CD8-positive, alpha-beta T cell (primary cell): ENCODE measurements at regions of chr15 and their contacts with region 1.

Region 1: DNA sequence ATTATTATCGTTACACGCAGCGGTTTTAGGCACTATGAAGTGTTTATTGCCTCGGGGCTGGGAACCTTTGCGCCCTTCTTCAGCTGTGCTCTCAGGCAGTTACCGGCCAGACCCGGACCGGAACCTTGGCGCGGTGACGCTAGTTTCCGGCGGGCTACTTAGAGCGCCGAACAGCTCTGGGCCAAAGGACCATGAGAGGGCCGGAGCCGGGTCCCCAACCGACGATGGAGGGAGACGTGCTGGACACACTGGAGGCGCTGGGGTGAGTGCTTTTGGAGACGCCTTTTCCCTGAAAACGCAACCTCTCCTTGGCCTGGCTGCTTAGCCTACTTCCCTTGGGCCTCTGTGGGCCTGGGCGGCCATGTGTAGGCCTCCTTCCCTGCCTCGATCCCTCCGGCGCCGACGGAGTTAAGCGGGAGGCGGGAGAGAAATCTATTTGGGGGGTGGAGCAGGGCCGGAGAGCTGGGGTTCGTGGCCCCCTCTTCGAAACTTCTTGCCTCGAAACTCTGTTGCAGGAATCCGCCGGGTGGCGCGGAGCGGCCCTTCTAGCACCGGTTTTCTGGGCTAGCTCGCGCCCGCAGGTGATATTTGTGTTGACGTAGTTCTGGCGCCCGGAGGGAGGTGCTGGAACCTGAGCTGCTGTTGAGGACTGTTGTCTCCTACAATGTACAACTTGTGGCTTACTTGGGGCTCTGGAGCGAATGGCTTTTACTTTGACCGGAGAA is at the start of gene FAM98B:
- DNase-seq: peak; percentile 80 to 95 (median 87)
- ATAC-seq: peak; percentile 89
- H3K4me3 ChIP-seq: peak within 1 kb of the TSS; percentile 84 to 87
- H3K4me3 Mint-ChIP-seq: peak within 1 kb of the TSS; percentile 98
- H3K27ac ChIP-seq: peak within 1 kb of the TSS; percentile 79 to 88
- H3K27ac Mint-ChIP-seq: peak within 1 kb of the TSS; percentile 99
- H3K4me1 ChIP-seq: peaks cover 19% of the 10 kb centered on the region
- H3K4me1 Mint-ChIP-seq: peaks cover 39% of the 10 kb centered on the region
- H3K27me3 ChIP-seq: no peaks in the 10 kb centered on the region
- H3K27me3 Mint-ChIP-seq: no peaks in the 10 kb centered on the region
- CTCF ChIP-seq: no peak
- total RNA-seq, gene FAM98B: 18.4 to 19.4 TPM

Region 2: GRCh38 chr15:36579792-36580431 is 1874.2 kb before region 1 on chr15:
- CTCF ChIA-PET with region 1: no interaction called
- POLR2A ChIA-PET with region 1: no interaction called
- intact Hi-C with region 1: loop called in 1 of 2 experiments (anchors 5 kb)
- DNase-seq: peak in 6 of 9 experiments; percentile 1 to 57 (median 24)
- ATAC-seq: peak; percentile 22
- H3K4me3 ChIP-seq: peak overlapping the region; percentile 87 to 95
- H3K4me3 Mint-ChIP-seq: peak overlapping the region; percentile 91
- H3K27ac ChIP-seq: peak overlapping the region; percentile 74 to 93
- H3K27ac Mint-ChIP-seq: peak overlapping the region; percentile 93
- H3K4me1 ChIP-seq: peaks cover 12% of the 10 kb centered on the region
- H3K4me1 Mint-ChIP-seq: peaks cover 32% of the 10 kb centered on the region
- H3K27me3 ChIP-seq: no peaks in the 10 kb centered on the region
- H3K27me3 Mint-ChIP-seq: no peaks in the 10 kb centered on the region
- CTCF ChIP-seq: no peak

Region 3: GRCh38 chr15:38021259-38021658 is 432.9 kb before region 1 on chr15:
- CTCF ChIA-PET with region 1: no interaction called
- POLR2A ChIA-PET with region 1: no interaction called
- intact Hi-C with region 1: no loop called
- DNase-seq: no peak
- ATAC-seq: no peak
- H3K4me3 ChIP-seq: no peak overlapping the region
- H3K4me3 Mint-ChIP-seq: no peak overlapping the region
- H3K27ac ChIP-seq: no peak overlapping the region
- H3K27ac Mint-ChIP-seq: no peak overlapping the region
- H3K4me1 ChIP-seq: no peaks in the 10 kb centered on the region
- H3K4me1 Mint-ChIP-seq: no peaks in the 10 kb centered on the region
- H3K27me3 ChIP-seq: no peaks in the 10 kb centered on the region
- H3K27me3 Mint-ChIP-seq: peaks cover 4% of the 10 kb centered on the region
- CTCF ChIP-seq: no peak

Region 4: DNA sequence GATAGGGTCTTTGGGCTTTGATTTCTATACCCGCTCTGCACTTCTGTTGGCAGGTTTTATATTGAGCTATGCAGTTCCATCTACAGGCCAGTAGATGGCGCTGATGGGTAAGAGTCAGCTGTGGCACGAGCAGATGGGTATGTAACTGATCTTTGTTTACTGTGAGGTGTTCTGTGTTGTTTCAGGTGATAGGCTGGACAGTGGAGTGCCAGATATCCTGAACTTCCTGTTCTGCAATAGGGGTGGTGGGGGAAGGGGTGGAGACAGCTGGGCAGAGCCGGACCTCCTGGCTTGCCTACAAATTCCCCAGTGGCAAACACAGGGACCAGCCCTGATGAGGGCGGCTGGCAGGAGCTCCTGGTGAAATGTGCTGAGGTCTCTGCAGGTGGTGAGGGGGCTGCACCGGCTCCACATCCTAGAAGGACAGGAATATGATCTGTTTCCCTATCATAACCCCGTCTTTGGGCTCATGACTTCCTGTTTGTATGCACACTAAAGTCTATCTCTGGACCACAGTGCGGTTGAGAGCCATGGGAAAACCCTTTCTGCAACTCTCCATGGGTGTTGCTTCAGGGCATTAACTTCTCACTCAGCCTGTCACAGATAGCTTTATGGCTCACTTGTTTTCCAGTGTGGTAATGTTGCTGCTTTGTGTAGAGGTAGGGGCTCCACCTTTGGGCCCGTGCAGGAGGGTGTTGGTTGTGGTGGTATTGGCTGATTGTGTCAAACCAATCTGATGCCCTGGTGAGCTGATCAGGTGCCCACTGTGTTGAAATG is 13.6 kb before region 1 on chr15:
- CTCF ChIA-PET with region 1: interaction called, 25 read pairs
- POLR2A ChIA-PET with region 1: interaction called, 7 read pairs
- intact Hi-C with region 1: no loop called
- DNase-seq: peak in 8 of 9 experiments; percentile 24 to 84 (median 51)
- ATAC-seq: peak; percentile 99
- H3K4me3 ChIP-seq: no peak overlapping the region
- H3K4me3 Mint-ChIP-seq: no peak overlapping the region
- H3K27ac ChIP-seq: no peak overlapping the region
- H3K27ac Mint-ChIP-seq: no peak overlapping the region
- H3K4me1 ChIP-seq: peaks cover 4% of the 10 kb centered on the region
- H3K4me1 Mint-ChIP-seq: peaks cover 3% of the 10 kb centered on the region
- H3K27me3 ChIP-seq: no peaks in the 10 kb centered on the region
- H3K27me3 Mint-ChIP-seq: peaks cover 28% of the 10 kb centered on the region
- CTCF ChIP-seq: peak; percentile 98

Region 5: DNA sequence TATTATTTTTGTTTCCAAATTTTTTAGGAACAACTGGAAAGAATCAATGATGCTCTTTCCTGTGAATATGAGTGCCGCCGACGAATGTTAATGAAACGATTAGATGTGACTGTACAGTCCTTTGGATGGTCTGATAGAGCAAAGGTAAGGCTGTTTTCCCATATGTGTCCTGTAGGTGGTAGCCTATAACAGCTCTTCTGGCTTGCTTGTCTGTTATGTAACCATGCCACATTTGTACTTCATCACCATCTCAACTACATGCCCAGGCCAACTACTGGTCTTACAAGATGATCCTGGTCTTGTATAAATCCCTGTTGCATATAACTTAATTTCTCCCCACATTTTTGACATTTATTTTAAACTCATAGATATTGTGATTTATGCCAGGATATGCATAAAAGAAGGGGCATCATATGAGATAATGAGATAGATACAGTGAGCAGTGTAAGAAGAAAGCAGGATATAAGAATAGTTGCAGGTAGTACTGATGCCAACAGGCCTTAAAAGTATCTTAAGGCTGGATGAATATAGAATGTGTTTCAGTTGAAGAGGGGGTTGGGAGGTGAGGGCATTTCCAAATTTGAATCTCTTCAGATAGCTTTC is 20.1 kb after region 1 on chr15:
- CTCF ChIA-PET with region 1: interaction called, 9 read pairs
- POLR2A ChIA-PET with region 1: interaction called, 7 read pairs
- intact Hi-C with region 1: loop called in 1 of 2 experiments (anchors 2 kb)
- DNase-seq: peak in 7 of 9 experiments; percentile 13 to 85 (median 32)
- ATAC-seq: peak; percentile 99
- H3K4me3 ChIP-seq: no peak overlapping the region
- H3K4me3 Mint-ChIP-seq: no peak overlapping the region
- H3K27ac ChIP-seq: peak overlapping the region in 1 of 2 experiments; percentile 17
- H3K27ac Mint-ChIP-seq: peak overlapping the region; percentile 37
- H3K4me1 ChIP-seq: no peaks in the 10 kb centered on the region
- H3K4me1 Mint-ChIP-seq: peaks cover 9% of the 10 kb centered on the region
- H3K27me3 ChIP-seq: no peaks in the 10 kb centered on the region
- H3K27me3 Mint-ChIP-seq: no peaks in the 10 kb centered on the region
- CTCF ChIP-seq: peak; percentile 74

Region 6: GRCh38 chr15:39934397-39935071 is 1480.4 kb after region 1 on chr15:
- CTCF ChIA-PET with region 1: no interaction called
- POLR2A ChIA-PET with region 1: no interaction called
- intact Hi-C with region 1: loop called in 1 of 2 experiments (anchors 10 kb)
- DNase-seq: peak in 1 of 9 experiments; percentile 30
- ATAC-seq: no peak
- H3K4me3 ChIP-seq: peak overlapping the region; percentile 79 to 82
- H3K4me3 Mint-ChIP-seq: peak overlapping the region; percentile 83
- H3K27ac ChIP-seq: peak overlapping the region in 1 of 2 experiments; percentile 47
- H3K27ac Mint-ChIP-seq: peak overlapping the region; percentile 5
- H3K4me1 ChIP-seq: peaks cover 7% of the 10 kb centered on the region
- H3K4me1 Mint-ChIP-seq: peaks cover 34% of the 10 kb centered on the region
- H3K27me3 ChIP-seq: no peaks in the 10 kb centered on the region
- H3K27me3 Mint-ChIP-seq: peaks cover 2% of the 10 kb centered on the region
- CTCF ChIP-seq: no peak

Region 7: DNA sequence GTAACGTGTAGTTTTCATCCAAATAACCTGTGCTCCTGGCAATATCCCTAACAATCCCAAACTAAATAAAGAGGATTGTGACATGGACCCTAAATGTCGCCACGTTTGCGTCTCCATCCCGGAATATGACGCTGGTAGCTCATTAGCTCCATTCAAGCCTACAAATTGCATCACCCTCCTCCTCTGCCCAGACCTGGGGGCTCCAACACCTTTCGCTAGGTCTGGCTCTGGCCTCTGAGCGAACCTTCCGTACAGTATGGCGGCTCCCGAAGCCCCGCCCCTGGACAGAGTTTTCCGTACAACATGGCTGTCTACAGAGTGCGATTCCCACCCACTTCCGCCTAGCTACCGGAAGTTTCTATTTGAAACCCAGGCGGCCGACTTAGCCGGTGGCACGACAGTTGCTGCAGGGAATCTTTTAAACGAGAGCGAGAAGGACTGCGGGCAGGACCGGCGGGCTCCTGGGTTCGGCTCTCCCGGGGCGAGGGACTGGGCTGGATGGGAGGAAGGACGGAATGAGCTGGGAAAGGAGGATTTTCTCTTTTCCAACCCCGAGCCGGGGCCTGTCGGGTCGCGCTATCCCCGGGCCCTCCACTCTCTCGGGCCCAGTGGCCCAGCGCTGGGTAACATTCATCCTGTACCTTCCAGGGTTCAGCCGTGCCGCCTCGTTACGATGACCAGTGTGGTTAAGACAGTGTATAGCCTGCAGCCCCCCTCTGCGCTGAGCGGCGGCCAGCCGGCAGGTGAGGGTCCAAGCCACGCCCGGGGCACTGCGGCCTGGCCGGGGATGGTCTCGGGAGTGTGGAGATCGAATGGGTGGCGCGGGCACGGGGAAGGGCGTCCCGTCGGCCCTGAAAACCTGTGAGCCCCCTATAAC is 1928.7 kb after region 1 on chr15 and contains the start of gene KNSTRN:
- CTCF ChIA-PET with region 1: no interaction called
- POLR2A ChIA-PET with region 1: no interaction called
- intact Hi-C with region 1: loop called in 1 of 2 experiments (anchors 5 kb)
- DNase-seq: peak; percentile 84 to 95 (median 93)
- ATAC-seq: peak; percentile 99
- H3K4me3 ChIP-seq: peak within 1 kb of the TSS; percentile 73 to 93
- H3K4me3 Mint-ChIP-seq: peak within 1 kb of the TSS; percentile 99
- H3K27ac ChIP-seq: peak within 1 kb of the TSS in 1 of 2 experiments; percentile 54
- H3K27ac Mint-ChIP-seq: peak within 1 kb of the TSS; percentile 81
- H3K4me1 ChIP-seq: peaks cover 13% of the 10 kb centered on the region
- H3K4me1 Mint-ChIP-seq: peaks cover 16% of the 10 kb centered on the region
- H3K27me3 ChIP-seq: no peaks in the 10 kb centered on the region
- H3K27me3 Mint-ChIP-seq: no peaks in the 10 kb centered on the region
- CTCF ChIP-seq: no peak
- total RNA-seq, gene KNSTRN: 3.8 to 5.4 TPM